A673 (cell line): ENCODE measurements at regions of chr5 and their contacts with region 1.

Region 1: GRCh38 chr5:107282061-107282460 is 388.7 kb downstream of the EFNA5 start:
- DNase-seq: peak; percentile 3
- H3K4me3 ChIP-seq: no peak overlapping the region
- H3K27ac ChIP-seq: no peak overlapping the region
- H3K4me1 ChIP-seq: no peaks in the 10 kb centered on the region
- H3K27me3 ChIP-seq: no peaks in the 10 kb centered on the region
- CTCF ChIP-seq: no peak

Region 2: DNA sequence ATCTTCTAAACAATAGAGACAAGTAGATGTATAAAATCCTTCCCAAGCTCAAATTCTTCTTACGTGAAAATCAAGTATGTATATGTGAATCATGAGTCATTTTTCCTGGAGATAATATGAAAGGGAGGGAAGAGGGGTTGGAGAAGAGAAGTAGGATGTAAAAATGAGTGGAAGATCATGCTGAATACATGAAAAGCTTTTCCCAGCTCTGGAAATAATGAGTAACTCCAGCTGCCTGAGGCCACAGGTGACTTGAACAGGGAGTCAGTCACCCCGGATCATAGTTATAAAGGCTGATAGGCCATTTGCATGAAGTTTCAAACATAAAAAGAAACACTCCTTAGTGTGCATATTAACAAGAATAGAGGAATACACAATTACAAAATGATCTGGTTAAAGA is 98.0 kb before region 1 on chr5:
- CTCF ChIA-PET with region 1: no interaction called
- POLR2A ChIA-PET with region 1: interaction called, 10 read pairs
- intact Hi-C with region 1: no loop called
- DNase-seq: no peak
- H3K4me3 ChIP-seq: no peak overlapping the region
- H3K27ac ChIP-seq: no peak overlapping the region
- H3K4me1 ChIP-seq: no peaks in the 10 kb centered on the region
- H3K27me3 ChIP-seq: no peaks in the 10 kb centered on the region
- CTCF ChIP-seq: no peak

Region 3: GRCh38 chr5:107337281-107337680 is 55.2 kb after region 1 on chr5:
- CTCF ChIA-PET with region 1: no interaction called
- POLR2A ChIA-PET with region 1: no interaction called
- intact Hi-C with region 1: no loop called
- DNase-seq: no peak
- H3K4me3 ChIP-seq: no peak overlapping the region
- H3K27ac ChIP-seq: no peak overlapping the region
- H3K4me1 ChIP-seq: peaks cover 3% of the 10 kb centered on the region
- H3K27me3 ChIP-seq: peaks cover 9% of the 10 kb centered on the region
- CTCF ChIP-seq: no peak